ENCODE measurements at regions of chr6 and their contacts with region 1.

Region 1: DNA sequence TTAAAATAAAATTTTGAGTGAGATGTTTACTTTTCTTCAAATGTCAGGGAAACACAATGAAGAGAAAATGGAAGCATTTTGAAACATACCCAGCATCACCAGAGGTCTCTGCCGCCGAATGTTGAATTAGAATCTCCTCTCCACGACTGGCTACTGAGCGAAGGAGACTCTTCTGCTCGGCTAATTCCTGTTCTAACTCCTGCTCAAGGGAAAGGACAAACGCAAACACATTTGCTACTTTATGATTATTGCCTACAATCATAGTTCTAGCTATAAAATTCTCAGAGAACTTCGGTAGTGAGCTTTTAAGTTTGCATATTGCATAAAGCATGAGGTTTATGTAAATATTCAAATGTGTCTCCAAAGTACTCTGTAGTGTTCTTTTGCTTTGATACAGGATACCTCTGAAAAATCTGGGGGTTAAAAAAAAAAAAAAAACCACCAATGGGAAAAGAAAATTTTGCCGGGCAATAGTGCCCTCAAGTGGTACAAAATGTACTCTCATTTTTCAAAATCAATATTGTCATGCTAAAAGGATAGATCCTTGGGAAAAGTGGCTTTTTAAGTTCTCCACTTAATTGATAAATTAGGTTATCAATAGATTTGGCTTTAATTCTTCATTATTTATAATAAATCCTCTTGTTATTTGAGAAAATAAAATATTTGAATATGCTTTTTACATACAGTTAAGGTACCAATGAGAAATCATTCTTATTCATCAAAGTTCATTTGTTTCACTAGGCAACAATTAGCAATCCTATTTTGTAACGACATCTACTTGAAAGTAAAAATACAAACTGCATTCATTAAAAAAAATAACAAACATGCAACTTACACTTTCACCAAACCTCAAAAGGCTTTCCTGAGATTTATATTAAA is 369.0 kb downstream of the SYNE1 start:
- DNase-seq: peak in 1 of 2 experiments; percentile 12
- H3K4me3 ChIP-seq: no peak overlapping the region
- H3K27ac ChIP-seq: no peak overlapping the region
- H3K4me1 ChIP-seq: peaks cover 29% of the 10 kb centered on the region
- H3K27me3 ChIP-seq: no peaks in the 10 kb centered on the region
- CTCF ChIP-seq: peak; percentile 81

Region 2: GRCh38 chr6:151440930-151441329 is 827.3 kb before region 1 on chr6:
- CTCF ChIA-PET with region 1: no interaction called
- POLR2A ChIA-PET with region 1: no interaction called
- intact Hi-C with region 1: loop called (anchors 5 kb)
- DNase-seq: no peak
- H3K4me3 ChIP-seq: no peak overlapping the region
- H3K27ac ChIP-seq: no peak overlapping the region
- H3K4me1 ChIP-seq: peaks cover 17% of the 10 kb centered on the region
- H3K27me3 ChIP-seq: no peaks in the 10 kb centered on the region
- CTCF ChIP-seq: no peak; the same call in 1 of the 2 replicates

Region 3: DNA sequence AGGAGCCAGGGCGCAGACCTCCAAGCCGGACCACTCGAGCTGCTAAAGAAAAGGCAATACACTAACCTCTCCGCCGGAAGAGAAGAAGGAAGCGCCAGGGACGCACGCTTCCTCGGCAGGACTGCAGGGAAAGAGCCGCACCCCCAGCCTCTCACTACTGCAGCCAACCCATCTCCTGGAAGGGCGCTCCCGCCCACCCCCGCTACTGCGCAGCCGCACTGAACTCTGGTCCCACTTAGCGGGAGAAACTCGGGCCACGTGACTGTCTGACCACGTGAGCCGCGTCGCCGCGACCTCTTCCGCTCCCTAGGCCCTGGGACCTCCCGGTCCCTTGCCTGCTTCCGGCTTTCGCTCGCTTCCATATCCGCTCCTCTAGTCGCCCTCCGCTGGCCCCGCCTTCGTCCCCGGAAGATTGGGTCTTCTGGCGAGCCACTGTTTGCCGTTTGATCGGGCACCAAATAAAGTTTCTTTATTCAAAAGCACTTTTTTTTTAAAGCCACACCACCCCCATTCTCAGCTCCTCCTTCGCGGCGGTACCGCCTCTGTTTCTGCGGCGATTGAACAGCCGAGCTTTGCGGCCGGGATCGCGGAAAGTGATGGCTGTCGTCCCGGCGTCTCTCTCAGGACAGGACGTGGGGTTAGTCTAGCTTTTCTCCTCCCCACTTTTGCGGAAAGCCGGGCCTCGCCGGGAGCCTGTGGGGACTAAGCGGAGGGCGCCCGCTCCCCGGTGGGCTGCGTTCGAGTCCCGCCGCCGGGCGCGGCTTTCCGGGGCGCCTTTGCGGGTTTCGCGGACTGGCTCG is 816.1 kb before region 1 on chr6 and contains the start of gene RMND1:
- CTCF ChIA-PET with region 1: no interaction called
- POLR2A ChIA-PET with region 1: no interaction called
- intact Hi-C with region 1: loop called (anchors 2 kb)
- DNase-seq: peak; percentile 97
- H3K4me3 ChIP-seq: peak within 1 kb of the TSS; percentile 83
- H3K27ac ChIP-seq: peak within 1 kb of the TSS; percentile 72
- H3K4me1 ChIP-seq: peaks cover 13% of the 10 kb centered on the region; the same call in 1 of the 2 replicates
- H3K27me3 ChIP-seq: no peaks in the 10 kb centered on the region
- CTCF ChIP-seq: no peak
- total RNA-seq, gene RMND1: 17.6 and 19.3 TPM in 2 replicates

Region 4: DNA sequence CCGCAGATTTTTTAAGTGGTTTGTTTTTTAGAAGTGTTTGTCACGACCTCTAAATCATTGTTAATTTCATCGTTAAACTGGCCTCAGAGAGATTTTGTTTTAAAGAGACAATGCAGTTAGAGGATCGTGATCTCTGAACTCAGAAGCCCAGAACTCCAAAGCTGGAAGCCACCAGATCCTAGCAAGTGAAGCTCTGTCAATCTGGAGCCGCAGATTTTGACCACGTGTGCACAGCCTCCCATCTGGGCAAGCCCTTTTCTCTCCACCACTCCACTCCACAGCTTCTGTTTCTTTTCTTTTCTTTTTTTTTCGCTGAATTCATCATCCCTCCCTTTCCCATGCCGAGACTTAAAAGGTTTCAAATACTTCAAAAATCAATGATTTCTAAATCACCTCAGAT is 602.9 kb before region 1 on chr6:
- CTCF ChIA-PET with region 1: no interaction called
- POLR2A ChIA-PET with region 1: interaction called, 23 read pairs
- intact Hi-C with region 1: no loop called
- DNase-seq: no peak
- H3K4me3 ChIP-seq: no peak overlapping the region
- H3K27ac ChIP-seq: no peak overlapping the region
- H3K4me1 ChIP-seq: peaks cover 24% of the 10 kb centered on the region
- H3K27me3 ChIP-seq: no peaks in the 10 kb centered on the region
- CTCF ChIP-seq: no peak

Region 5: GRCh38 chr6:151675746-151676416 is 592.3 kb before region 1 on chr6:
- CTCF ChIA-PET with region 1: interaction called, 10 read pairs
- POLR2A ChIA-PET with region 1: no interaction called
- intact Hi-C with region 1: loop called (anchors 2 kb)
- DNase-seq: peak; percentile 28 to 46
- H3K4me3 ChIP-seq: no peak overlapping the region
- H3K27ac ChIP-seq: no peak overlapping the region
- H3K4me1 ChIP-seq: no peaks in the 10 kb centered on the region
- H3K27me3 ChIP-seq: no peaks in the 10 kb centered on the region
- CTCF ChIP-seq: peak; percentile 91

Region 6: DNA sequence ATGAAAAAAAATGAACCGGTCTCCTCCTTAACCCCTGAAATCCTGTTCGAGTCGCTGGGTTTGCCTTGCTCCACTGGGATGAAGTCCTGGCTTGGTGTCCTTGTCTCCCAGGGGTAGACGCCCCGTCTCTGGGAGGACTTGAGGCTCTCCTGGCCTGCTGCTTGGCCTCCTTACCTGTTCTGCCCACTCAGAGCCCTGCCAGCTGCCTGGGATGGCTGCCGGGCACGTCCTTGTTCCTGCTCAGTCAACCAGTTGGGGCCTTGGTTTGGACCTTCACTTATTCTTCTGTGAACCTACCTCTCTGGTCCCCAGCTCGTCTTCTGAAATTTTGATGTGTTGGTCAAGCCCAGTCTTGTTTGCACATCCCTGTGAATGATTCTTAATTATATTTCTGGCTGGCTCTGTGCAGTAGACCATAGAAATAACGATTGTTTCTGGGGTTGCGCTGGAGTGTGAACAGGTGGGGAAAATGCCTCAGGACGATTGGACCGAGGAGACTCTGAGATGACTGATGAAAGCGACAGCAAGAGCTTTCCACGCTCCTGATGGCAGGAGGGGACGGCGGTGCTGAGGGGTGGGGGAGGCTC is 587.3 kb before region 1 on chr6:
- CTCF ChIA-PET with region 1: interaction called, 10 read pairs
- POLR2A ChIA-PET with region 1: no interaction called
- intact Hi-C with region 1: no loop called
- DNase-seq: no peak
- H3K4me3 ChIP-seq: no peak overlapping the region
- H3K27ac ChIP-seq: no peak overlapping the region
- H3K4me1 ChIP-seq: no peaks in the 10 kb centered on the region
- H3K27me3 ChIP-seq: no peaks in the 10 kb centered on the region
- CTCF ChIP-seq: no peak